ENCODE measurements at regions of chr1 and their contacts with region 1.

Region 1: DNA sequence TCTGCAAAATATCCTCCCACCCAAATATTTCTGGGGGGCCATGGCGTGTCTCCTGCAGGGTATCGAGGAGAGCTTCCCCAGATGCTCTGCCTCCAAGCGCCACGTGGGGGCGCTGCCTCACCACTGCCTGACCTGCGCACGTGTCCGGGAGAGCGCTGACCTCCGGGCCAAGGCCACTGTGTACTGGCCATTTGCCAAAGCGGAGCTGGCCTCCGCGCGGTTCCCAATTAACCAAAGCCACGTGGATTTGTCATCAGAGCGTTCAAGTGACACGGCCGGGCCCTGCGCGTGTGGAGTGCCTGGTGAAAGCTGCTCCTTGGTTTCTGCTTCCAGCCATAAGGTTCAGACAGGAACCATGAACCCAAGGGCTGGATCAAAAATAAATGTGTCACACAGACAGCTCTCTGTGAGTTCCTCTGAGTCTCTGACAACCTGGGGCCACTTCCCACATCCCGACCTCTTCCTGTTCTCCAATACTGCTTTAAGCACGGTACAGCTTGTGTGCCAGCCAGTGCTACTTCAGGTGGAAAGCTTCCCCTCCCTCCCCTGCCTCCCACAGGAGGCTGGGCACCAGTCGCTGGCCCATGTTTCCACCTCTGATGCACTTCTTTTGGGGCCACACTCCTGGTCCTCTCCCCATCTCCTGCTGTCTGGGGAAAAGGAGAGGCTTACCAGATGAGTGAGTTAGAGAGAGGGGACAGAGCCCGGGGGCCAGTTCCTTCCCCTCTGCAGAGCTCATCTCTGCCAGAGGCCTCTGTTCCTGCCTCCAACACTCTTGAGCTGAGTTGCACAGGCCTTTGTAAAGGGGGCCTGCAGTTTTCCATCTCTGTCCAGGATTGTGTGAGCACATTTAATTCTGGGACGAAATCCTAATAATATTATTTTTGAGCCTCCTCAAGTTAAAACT is 26.1 kb downstream of the ZP4 start:
- DNase-seq: peak; percentile 77
- H3K4me3 Mint-ChIP-seq: peak overlapping the region; percentile 66
- H3K27ac Mint-ChIP-seq: peak overlapping the region; percentile 16
- H3K4me1 Mint-ChIP-seq: peaks cover 9% of the 10 kb centered on the region
- H3K27me3 Mint-ChIP-seq: no peaks in the 10 kb centered on the region
- CTCF ChIP-seq: peak; percentile 100

Region 2: DNA sequence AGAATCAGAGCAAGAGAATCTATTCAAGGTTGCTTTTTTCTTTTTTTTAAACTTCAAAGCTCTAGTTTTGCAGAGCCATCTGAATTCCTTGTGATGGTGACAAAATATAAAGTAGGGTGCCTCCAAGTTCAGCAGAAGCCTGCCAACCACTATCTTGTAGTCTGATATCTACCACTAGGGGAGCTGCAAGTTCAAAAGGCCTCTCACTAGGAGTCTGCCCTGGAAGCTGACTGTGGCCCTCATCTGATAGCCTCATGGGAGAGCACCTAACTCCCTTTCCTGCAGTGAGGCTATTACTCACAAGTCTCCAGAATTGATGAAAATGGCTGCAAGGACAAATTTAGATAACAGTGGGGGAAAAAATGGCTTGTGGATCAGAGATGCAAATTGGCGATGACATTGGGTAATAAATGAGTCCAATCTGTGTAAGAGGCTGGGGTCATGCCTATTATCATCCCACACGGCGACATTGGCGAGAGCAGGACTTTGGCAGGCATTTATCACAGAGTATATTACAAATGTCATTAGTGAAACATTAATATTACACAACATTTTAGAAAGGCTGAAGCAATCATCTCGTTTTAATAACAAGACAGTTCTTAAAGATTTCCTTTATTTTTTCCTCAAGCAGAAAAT is 36.8 kb after region 1 on chr1:
- CTCF ChIA-PET with region 1: interaction called, 14 read pairs
- POLR2A ChIA-PET with region 1: interaction called, 3 read pairs
- intact Hi-C with region 1: no loop called
- DNase-seq: peak; percentile 76
- H3K4me3 Mint-ChIP-seq: no peak overlapping the region
- H3K27ac Mint-ChIP-seq: no peak overlapping the region
- H3K4me1 Mint-ChIP-seq: no peaks in the 10 kb centered on the region
- H3K27me3 Mint-ChIP-seq: no peaks in the 10 kb centered on the region
- CTCF ChIP-seq: peak; percentile 80

Region 3: DNA sequence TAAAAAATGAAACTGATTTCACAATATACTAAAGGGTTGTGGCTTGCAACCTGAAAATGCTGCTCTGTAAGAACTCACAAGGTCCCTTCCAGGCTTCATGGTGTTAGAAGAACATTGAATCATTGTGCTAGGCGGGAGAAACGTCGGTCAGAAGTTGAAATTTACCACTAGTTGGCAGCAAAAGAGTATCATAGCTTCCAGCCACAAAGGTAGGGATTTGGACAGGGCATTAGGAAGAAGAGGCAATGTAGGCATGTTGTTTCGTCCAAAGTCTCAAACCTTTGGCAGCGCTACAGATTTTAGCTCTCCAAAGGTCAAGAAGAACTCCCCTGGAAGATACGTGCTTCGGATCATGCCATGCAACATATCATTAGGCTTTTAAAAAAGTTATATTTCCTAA is 88.6 kb after region 1 on chr1:
- CTCF ChIA-PET with region 1: interaction called, 9 read pairs
- POLR2A ChIA-PET with region 1: no interaction called
- intact Hi-C with region 1: loop called (anchors 5 kb)
- DNase-seq: peak; percentile 58
- H3K4me3 Mint-ChIP-seq: no peak overlapping the region
- H3K27ac Mint-ChIP-seq: no peak overlapping the region
- H3K4me1 Mint-ChIP-seq: no peaks in the 10 kb centered on the region
- H3K27me3 Mint-ChIP-seq: no peaks in the 10 kb centered on the region
- CTCF ChIP-seq: peak; percentile 27

Region 4: GRCh38 chr1:238205045-238205662 is 340.6 kb after region 1 on chr1:
- CTCF ChIA-PET with region 1: interaction called, 11 read pairs
- POLR2A ChIA-PET with region 1: no interaction called
- intact Hi-C with region 1: no loop called
- DNase-seq: no peak
- H3K4me3 Mint-ChIP-seq: no peak overlapping the region
- H3K27ac Mint-ChIP-seq: no peak overlapping the region
- H3K4me1 Mint-ChIP-seq: no peaks in the 10 kb centered on the region
- H3K27me3 Mint-ChIP-seq: no peaks in the 10 kb centered on the region
- CTCF ChIP-seq: no peak

Region 5: DNA sequence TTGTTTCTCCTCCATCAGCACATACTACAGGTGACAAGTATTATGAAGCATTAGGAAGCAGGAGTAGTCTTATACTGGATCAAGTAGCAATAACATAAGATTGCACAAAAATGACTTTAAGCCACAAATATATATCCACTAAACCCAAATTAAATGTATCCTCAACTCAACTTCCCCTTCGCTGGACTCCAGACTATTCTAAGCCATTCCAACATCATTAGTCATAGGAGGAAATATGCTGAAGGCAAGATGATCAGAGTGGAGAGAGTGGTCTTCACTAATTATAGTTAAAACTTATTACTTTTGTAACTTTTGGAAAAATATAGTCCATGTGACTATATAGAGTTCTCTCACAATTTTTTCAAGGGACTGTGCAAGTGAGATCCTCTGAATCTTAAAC is 416.8 kb after region 1 on chr1:
- CTCF ChIA-PET with region 1: interaction called, 14 read pairs
- POLR2A ChIA-PET with region 1: no interaction called
- intact Hi-C with region 1: no loop called
- DNase-seq: no peak
- H3K4me3 Mint-ChIP-seq: no peak overlapping the region
- H3K27ac Mint-ChIP-seq: no peak overlapping the region
- H3K4me1 Mint-ChIP-seq: no peaks in the 10 kb centered on the region
- H3K27me3 Mint-ChIP-seq: no peaks in the 10 kb centered on the region
- CTCF ChIP-seq: no peak

Region 6: GRCh38 chr1:239386453-239387303 is 1522.1 kb after region 1 on chr1 and contains the start of gene CHRM3:
- CTCF ChIA-PET with region 1: interaction called, 7 read pairs
- POLR2A ChIA-PET with region 1: no interaction called
- intact Hi-C with region 1: loop called (anchors 1 kb)
- DNase-seq: peak; percentile 96
- H3K4me3 Mint-ChIP-seq: peak within 1 kb of the TSS; percentile 89
- H3K27ac Mint-ChIP-seq: peak within 1 kb of the TSS; percentile 1
- H3K4me1 Mint-ChIP-seq: peaks cover 26% of the 10 kb centered on the region
- H3K27me3 Mint-ChIP-seq: peaks cover 55% of the 10 kb centered on the region
- CTCF ChIP-seq: peak; percentile 28
- total RNA-seq, gene CHRM3: 0.56 and 0.71 TPM in 2 replicates